PC-9 (cell line): ENCODE measurements at regions of chr11 and their contacts with region 1.

Region 1: GRCh38 chr11:120929664-120930154 is 94.2 kb upstream of the TBCEL start:
- DNase-seq: peak in 1 of 2 experiments; percentile 12
- H3K4me3 ChIP-seq: no peak overlapping the region
- H3K27ac ChIP-seq: no peak overlapping the region
- H3K4me1 ChIP-seq: no peaks in the 10 kb centered on the region
- H3K27me3 ChIP-seq: peaks cover 5% of the 10 kb centered on the region
- CTCF ChIP-seq: peak; percentile 86

Region 2: GRCh38 chr11:120682866-120683265 is 246.8 kb before region 1 on chr11:
- CTCF ChIA-PET with region 1: no interaction called
- POLR2A ChIA-PET with region 1: no interaction called
- intact Hi-C with region 1: loop called (anchors 10 kb)
- DNase-seq: no peak
- H3K4me3 ChIP-seq: no peak overlapping the region
- H3K27ac ChIP-seq: no peak overlapping the region
- H3K4me1 ChIP-seq: no peaks in the 10 kb centered on the region
- H3K27me3 ChIP-seq: peaks cover 95% of the 10 kb centered on the region
- CTCF ChIP-seq: no peak

Region 3: GRCh38 chr11:120696597-120697218 is 233.0 kb before region 1 on chr11:
- CTCF ChIA-PET with region 1: no interaction called
- POLR2A ChIA-PET with region 1: interaction called, 17 read pairs
- intact Hi-C with region 1: no loop called
- DNase-seq: no peak
- H3K4me3 ChIP-seq: no peak overlapping the region
- H3K27ac ChIP-seq: no peak overlapping the region
- H3K4me1 ChIP-seq: no peaks in the 10 kb centered on the region
- H3K27me3 ChIP-seq: peaks cover 92% of the 10 kb centered on the region
- CTCF ChIP-seq: 0 out of 2 replicates have a peak, but pooled peaks have one; percentile 34

Region 4: GRCh38 chr11:120839846-120840402 is 89.8 kb before region 1 on chr11:
- CTCF ChIA-PET with region 1: no interaction called
- POLR2A ChIA-PET with region 1: no interaction called
- intact Hi-C with region 1: no loop called
- DNase-seq: no peak
- H3K4me3 ChIP-seq: no peak overlapping the region
- H3K27ac ChIP-seq: no peak overlapping the region
- H3K4me1 ChIP-seq: no peaks in the 10 kb centered on the region
- H3K27me3 ChIP-seq: no peaks in the 10 kb centered on the region
- CTCF ChIP-seq: no peak

Region 5: DNA sequence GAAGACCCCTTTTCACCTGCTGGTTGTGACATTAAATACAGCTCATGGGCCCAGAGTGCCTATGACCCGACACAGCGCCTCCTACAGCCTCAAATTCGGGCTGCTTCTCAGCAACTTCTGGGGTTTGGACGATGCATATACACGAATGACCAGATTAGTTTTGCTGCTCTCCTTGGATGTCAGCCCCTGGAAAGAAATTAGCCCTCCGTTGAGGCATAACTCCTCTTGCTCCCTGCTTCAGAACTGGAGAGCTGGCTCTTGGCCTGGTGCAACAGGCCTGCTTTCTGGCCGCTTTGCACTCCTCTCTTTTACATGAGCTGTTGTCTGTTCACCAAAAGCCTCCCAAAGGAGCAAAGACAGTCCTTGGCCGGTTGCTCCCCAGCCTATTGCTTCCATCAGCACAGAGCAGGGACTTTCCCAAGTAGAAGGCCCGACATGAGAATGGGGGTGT is 174.6 kb after region 1 on chr11:
- CTCF ChIA-PET with region 1: no interaction called
- POLR2A ChIA-PET with region 1: no interaction called
- intact Hi-C with region 1: no loop called
- DNase-seq: no peak
- H3K4me3 ChIP-seq: no peak overlapping the region
- H3K27ac ChIP-seq: no peak overlapping the region
- H3K4me1 ChIP-seq: no peaks in the 10 kb centered on the region
- H3K27me3 ChIP-seq: peaks cover 95% of the 10 kb centered on the region
- CTCF ChIP-seq: 0 out of 2 replicates have a peak, but pooled peaks have one; percentile 21